Naive thymus-derived CD4-positive, alpha-beta T cell (primary cell): ENCODE measurements at regions of chr9 and their contacts with region 1.

Region 1: DNA sequence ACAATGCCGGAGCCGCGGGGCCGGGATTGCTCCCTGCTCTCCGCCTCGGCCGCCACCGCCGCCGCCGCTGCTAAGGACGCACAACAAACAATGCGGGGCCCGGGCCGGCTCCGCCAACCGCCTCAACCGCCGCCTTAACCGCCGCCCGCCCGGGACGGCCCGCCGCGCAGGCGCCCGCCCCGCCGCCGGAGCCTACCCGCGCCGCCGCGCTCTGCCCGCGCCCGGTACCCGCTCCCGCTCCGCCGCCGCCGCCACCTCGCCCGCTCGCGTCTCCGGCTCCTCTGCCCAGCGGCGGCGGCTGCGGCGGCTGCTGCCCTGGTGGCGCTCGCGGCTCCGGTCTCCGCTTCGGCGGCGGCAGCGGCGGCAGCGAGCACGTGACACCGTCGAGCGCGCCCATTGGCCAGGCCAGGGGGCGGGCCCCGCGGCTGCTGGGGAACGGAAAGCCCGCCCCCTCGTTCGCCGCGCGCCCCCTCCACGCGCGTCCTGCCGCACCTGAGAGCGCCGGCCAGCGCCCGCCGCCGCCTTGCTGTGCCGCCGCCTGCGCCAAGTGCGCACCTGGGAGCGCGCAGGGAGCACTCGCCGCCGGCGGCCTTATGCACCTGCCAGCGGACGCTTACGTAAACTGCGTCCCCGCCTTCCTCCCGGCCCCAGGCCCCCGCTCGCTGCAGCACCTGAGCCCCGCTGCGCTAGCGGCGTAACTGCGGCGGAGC is at the start of gene STRBP:
- DNase-seq: peak; percentile 90 to 98 (median 96)
- ATAC-seq: peak; percentile 96
- H3K4me3 ChIP-seq: peak within 1 kb of the TSS; percentile 76
- H3K4me3 Mint-ChIP-seq: peak within 1 kb of the TSS; percentile 72 to 97 (median 83)
- H3K27ac ChIP-seq: peak within 1 kb of the TSS; percentile 78
- H3K27ac Mint-ChIP-seq: peak within 1 kb of the TSS; percentile 37 to 90 (median 74)
- H3K4me1 ChIP-seq: peaks cover 3 to 12% of the 10 kb centered on the region in 2 donors
- H3K4me1 Mint-ChIP-seq: peaks cover 26 to 45% (median 40%) of the 10 kb centered on the region in 7 donors
- H3K27me3 ChIP-seq: no peaks in the 10 kb centered on the region
- H3K27me3 Mint-ChIP-seq: peaks cover 0 to 9% (median 0%) of the 10 kb centered on the region in 5 donors
- total RNA-seq, gene STRBP: 14.5 to 28.8 (median 17.5) TPM

Region 2: DNA sequence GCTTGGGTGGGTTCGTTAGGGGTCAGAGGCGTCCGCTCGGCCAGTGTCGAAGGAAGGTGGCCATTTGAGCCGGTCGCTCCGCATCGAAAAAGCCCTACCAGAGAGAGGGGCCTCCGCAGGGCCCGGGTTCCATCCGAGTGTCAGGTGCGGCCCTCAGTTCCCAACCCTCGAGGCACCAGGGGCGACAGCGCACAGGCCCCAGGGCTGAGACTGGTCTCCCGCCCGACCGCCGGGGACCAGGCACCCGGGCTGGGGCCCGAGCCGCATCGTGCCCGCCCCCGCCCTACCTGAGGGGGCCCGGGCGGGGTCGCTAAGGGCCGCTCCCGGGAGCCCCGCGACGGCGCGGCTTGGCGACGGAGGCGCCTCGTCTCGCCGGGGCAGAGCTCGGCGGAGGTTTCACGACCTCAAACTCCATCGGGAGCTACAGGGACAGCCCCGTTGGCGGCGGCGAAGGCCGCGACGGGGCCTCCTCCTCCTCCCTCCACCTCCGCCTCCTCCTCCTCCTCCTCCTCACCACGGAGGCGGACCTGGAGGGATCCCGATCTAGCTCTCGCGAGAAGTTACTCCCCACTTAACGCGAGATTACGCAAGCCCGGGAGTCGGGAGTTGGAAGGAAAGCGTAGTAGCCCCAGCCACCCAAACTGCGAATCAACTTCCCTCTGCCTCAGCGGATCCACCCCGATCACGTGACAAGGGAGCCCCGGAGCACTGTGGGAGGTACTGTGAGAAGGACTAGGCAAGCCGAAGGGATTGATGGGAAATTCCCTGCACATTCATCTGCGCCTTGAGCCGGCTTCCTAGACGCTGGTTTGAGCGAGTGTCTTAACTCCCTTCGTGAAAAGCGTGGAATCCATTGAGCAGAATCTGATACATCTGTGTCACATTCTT is 363.3 kb before region 1 on chr9 and contains the start of gene RC3H2:
- CTCF ChIA-PET with region 1: no interaction called
- POLR2A ChIA-PET with region 1: no interaction called
- intact Hi-C with region 1: loop called (anchors 2 to 10 kb)
- DNase-seq: peak; percentile 80 to 99 (median 97)
- ATAC-seq: peak; percentile 94
- H3K4me3 ChIP-seq: peak within 1 kb of the TSS; percentile 74
- H3K4me3 Mint-ChIP-seq: peak within 1 kb of the TSS; percentile 89 to 96 (median 93)
- H3K27ac ChIP-seq: peak within 1 kb of the TSS; percentile 100
- H3K27ac Mint-ChIP-seq: peak within 1 kb of the TSS; percentile 93 to 98 (median 95)
- H3K4me1 ChIP-seq: peaks cover 14 to 21% of the 10 kb centered on the region in 2 donors
- H3K4me1 Mint-ChIP-seq: peaks cover 11 to 47% (median 40%) of the 10 kb centered on the region in 7 donors
- H3K27me3 ChIP-seq: no peaks in the 10 kb centered on the region
- H3K27me3 Mint-ChIP-seq: peaks cover 0 to 3% (median 0%) of the 10 kb centered on the region in 5 donors
- total RNA-seq, gene RC3H2: 52.3 to 66.4 (median 57.0) TPM

Region 3: DNA sequence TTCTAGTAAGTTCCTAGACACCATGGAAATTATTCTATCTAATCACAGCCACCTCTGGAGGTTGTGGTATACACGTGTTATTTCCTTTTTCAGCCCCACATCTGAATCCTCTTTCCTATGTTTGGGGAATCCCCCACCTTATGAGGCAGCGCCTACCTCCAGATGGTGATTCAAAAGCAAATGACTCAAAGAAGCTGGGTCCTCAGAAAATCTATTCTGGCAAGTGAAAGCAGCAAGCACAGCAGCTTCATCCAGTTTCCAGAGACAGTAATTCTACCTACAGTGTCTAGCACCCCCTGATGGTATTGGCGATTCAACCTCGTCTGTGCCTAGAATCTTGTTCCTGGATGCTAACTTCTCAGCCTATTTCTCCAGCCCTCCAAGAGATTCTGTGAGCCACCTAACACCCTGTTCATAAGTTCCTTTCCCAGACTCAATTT is 43.0 kb before region 1 on chr9:
- CTCF ChIA-PET with region 1: no interaction called
- POLR2A ChIA-PET with region 1: no interaction called
- intact Hi-C with region 1: loop called (anchors 5 kb)
- DNase-seq: peak in 8 of 9 donors; percentile 14 to 67 (median 38)
- ATAC-seq: peak; percentile 93
- H3K4me3 ChIP-seq: no peak overlapping the region
- H3K4me3 Mint-ChIP-seq: peak overlapping the region in 3 of 10 donors; percentile 1 to 24 (median 6)
- H3K27ac ChIP-seq: no peak overlapping the region
- H3K27ac Mint-ChIP-seq: peak overlapping the region in 6 of 9 donors; percentile 2 to 48 (median 34)
- H3K4me1 ChIP-seq: peaks cover 7 to 9% of the 10 kb centered on the region in 2 donors
- H3K4me1 Mint-ChIP-seq: peaks cover 10 to 31% (median 18%) of the 10 kb centered on the region in 7 donors
- H3K27me3 ChIP-seq: no peaks in the 10 kb centered on the region
- H3K27me3 Mint-ChIP-seq: no peaks in the 10 kb centered on the region

Region 4: DNA sequence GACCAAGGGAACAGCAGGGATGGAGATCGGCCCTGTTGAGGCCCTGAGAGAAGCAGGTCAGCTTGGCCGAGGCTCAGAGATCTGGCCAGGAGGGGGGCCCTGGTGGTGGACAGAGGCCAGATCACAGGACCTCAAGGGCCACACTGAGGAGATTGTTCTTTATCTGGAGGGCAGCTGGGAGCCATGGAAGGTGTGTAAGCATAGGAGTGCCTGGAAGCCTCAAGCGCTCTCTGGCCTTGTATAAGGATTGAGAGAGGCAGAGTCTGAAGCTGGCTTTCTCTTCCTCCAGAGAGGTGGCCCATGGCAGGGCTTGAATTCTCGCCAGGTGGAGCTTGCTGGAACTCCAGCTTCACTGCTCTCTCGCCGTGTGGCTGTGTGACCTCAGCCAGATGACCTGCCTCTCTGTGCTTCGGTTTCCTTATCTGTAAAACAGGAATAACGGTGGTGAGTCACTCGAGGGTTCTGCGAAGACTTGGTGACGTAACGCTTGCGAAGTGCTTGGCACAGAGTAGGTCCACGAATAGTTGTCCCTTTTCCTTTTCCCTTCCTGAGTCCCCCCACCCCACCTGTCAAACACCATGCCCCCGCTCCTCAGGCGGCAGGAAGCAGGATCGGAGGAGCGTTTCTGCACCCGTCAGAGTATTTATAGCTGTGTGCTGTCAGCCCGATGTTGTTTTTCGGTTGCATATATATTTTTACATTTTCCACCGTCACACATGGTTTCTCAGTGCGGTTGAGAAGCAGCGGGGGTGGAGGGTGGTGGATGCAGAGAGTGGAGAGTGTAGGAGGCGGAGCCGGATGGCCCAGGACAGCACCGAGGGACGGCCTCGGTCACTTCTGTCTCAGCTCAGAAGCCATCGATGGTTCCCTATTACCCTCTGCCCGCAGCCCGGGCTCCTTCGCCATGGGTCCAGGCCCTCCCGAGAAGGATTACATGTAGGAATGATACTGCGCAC is 70.6 kb after region 1 on chr9:
- CTCF ChIA-PET with region 1: no interaction called
- POLR2A ChIA-PET with region 1: interaction called, 10 read pairs
- intact Hi-C with region 1: loop called (anchors 1 kb)
- DNase-seq: peak; percentile 16 to 79 (median 43)
- ATAC-seq: peak; percentile 79
- H3K4me3 ChIP-seq: peak overlapping the region; percentile 64
- H3K4me3 Mint-ChIP-seq: peak overlapping the region; percentile 80 to 96 (median 89)
- H3K27ac ChIP-seq: peak overlapping the region; percentile 59
- H3K27ac Mint-ChIP-seq: peak overlapping the region; percentile 84 to 95 (median 90)
- H3K4me1 ChIP-seq: peaks cover 15 to 22% of the 10 kb centered on the region in 2 donors
- H3K4me1 Mint-ChIP-seq: peaks cover 19 to 45% (median 43%) of the 10 kb centered on the region in 7 donors
- H3K27me3 ChIP-seq: no peaks in the 10 kb centered on the region
- H3K27me3 Mint-ChIP-seq: no peaks in the 10 kb centered on the region

Region 5: DNA sequence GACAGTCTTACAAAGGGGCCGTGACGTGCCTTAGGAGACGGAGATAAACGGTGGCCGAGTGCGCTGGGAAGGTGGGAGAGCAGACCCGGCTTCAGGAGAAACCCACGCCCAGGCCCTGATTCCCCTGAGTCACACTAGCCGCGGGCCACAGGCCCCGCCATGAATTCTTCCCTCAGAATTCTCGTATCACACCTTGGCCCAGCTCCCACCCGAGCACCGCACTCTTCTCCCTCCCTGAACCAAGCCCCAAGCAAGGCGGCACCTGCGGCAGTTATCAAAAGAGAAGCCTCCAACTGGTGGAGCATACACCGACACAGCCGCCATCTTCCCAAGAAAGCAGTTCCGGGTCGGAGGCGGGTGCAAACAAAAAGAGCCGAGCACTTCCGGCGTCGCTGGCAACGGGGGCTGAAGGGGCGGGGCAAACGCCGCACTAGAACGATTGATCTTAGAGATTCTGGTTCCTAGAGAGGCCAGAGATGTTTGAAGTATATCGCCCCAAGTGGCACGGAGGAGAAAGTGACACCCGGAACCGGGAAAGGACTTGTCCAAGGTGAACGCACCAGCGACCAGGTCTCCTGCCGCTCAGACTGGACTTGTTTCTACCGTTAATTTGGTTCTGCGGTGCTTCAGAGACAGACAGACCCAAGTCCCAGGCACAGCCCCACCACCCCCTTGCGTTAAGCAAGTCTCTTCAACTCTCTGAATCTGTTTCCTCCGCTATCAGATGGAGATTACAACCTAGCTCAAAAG is 1146.9 kb after region 1 on chr9 and contains the start of gene PSMB7:
- CTCF ChIA-PET with region 1: no interaction called
- POLR2A ChIA-PET with region 1: no interaction called
- intact Hi-C with region 1: loop called in 1 of 2 experiments (anchors 10 kb)
- DNase-seq: peak; percentile 91 to 97 (median 96)
- ATAC-seq: peak; percentile 99
- H3K4me3 ChIP-seq: peak within 1 kb of the TSS; percentile 75
- H3K4me3 Mint-ChIP-seq: peak within 1 kb of the TSS; percentile 93 to 99 (median 97)
- H3K27ac ChIP-seq: peak within 1 kb of the TSS; percentile 78
- H3K27ac Mint-ChIP-seq: peak within 1 kb of the TSS; percentile 82 to 98 (median 94)
- H3K4me1 ChIP-seq: peaks cover 13 to 18% of the 10 kb centered on the region in 2 donors
- H3K4me1 Mint-ChIP-seq: peaks cover 16 to 46% (median 39%) of the 10 kb centered on the region in 7 donors
- H3K27me3 ChIP-seq: no peaks in the 10 kb centered on the region
- H3K27me3 Mint-ChIP-seq: no peaks in the 10 kb centered on the region
- total RNA-seq, gene PSMB7: 59.4 to 129 (median 63.2) TPM